Heart left ventricle (tissue), 16 donors: ENCODE measurements at regions of chr13 and their contacts with region 1.

Region 1: GRCh38 chr13:22964245-22964966 is 216.4 kb upstream of the SGCG start:
- DNase-seq: no peak
- ATAC-seq: no peak
- H3K4me3 ChIP-seq: no peak overlapping the region
- H3K27ac ChIP-seq: no peak overlapping the region
- H3K4me1 ChIP-seq: no peaks in the 10 kb centered on the region
- H3K27me3 ChIP-seq: peaks cover 0 to 3% (median 0%) of the 10 kb centered on the region in 9 donors
- CTCF ChIP-seq: no peak
- POLR2A ChIP-seq: no peak

Region 2: GRCh38 chr13:21567714-21568113 is 1396.7 kb before region 1 on chr13:
- intact Hi-C with region 1: no loop called
- DNase-seq: no peak
- ATAC-seq: no peak
- H3K4me3 ChIP-seq: no peak overlapping the region
- H3K27ac ChIP-seq: no peak overlapping the region
- H3K4me1 ChIP-seq: peaks cover 0 to 7% (median 0%) of the 10 kb centered on the region in 12 donors
- H3K27me3 ChIP-seq: no peaks in the 10 kb centered on the region
- CTCF ChIP-seq: no peak
- POLR2A ChIP-seq: no peak

Region 3: GRCh38 chr13:23007426-23007825 is 43.0 kb after region 1 on chr13:
- intact Hi-C with region 1: no loop called
- DNase-seq: peak in 1 of 5 donors; percentile 24
- ATAC-seq: no peak
- H3K4me3 ChIP-seq: no peak overlapping the region
- H3K27ac ChIP-seq: no peak overlapping the region
- H3K4me1 ChIP-seq: peaks cover 0 to 3% (median 0%) of the 10 kb centered on the region in 12 donors
- H3K27me3 ChIP-seq: no peaks in the 10 kb centered on the region
- CTCF ChIP-seq: no peak
- POLR2A ChIP-seq: no peak

Region 4: DNA sequence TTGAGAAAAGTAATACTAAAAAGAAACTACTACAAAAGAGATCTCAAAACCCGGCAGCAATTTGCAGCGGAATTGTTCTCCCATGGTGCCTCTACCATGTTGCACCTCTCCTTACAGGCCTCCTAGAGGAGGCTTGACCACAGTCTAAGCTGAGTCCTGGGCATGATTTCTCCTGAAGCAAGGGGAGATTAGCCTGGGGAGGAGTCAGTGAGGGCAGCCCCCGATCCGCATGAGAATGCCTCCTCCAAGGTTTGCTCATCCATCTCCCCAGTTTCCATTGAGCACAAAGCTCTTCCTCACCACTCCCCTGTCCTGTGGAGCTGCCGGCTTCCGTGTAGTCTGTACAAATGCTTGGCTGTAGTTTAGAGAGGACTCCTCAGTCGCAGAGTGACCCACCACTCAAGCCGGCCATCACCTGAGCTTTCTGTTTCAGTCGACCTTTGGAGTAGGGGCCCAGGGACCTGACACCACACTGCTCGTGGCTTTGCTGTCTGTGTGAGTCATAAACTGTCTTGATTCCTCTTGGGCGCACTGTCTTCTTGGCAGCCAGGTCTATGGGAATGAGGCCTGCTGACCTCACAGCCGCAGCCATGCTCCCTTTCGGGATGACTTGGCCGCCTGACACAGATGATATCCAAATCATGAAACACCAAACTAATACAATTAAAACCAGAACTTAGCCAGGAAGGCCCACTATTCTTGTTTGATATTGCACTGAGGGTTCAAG is 1417.3 kb after region 1 on chr13:
- intact Hi-C with region 1: loop called in 2 of 10 experiments (anchors 10 kb)
- DNase-seq: no peak
- ATAC-seq: no peak
- H3K4me3 ChIP-seq: no peak overlapping the region
- H3K27ac ChIP-seq: no peak overlapping the region
- H3K4me1 ChIP-seq: no peaks in the 10 kb centered on the region
- H3K27me3 ChIP-seq: no peaks in the 10 kb centered on the region
- CTCF ChIP-seq: no peak
- POLR2A ChIP-seq: no peak